ENCODE measurements at regions of chr2 and their contacts with region 1.

Region 1: DNA sequence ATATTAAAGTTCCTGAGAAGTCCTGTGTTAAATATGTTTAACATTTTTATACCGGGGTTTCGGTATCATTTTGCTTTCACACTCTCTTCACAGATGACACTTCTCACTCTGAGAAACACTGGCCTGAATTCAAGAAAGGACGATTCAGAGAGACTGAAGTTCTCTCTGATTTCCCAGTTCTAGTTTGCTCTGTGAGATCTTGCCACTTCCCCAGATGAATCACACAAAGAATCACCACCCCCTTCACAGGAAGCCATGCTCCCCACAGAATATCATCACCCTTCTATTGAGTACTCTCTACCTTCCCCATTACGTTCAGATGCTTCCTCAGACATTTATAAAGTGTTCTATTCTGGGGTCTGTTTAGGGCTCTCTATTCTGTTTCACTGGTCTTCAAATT is 16.1 kb upstream of the CD207 start:
- DNase-seq: peak; percentile 57
- H3K4me3 Mint-ChIP-seq: peak overlapping the region; percentile 1
- H3K27ac Mint-ChIP-seq: peak overlapping the region; percentile 60
- H3K4me1 Mint-ChIP-seq: peaks cover 21% of the 10 kb centered on the region
- H3K27me3 Mint-ChIP-seq: peaks cover 2% of the 10 kb centered on the region

Region 2: GRCh38 chr2:70656421-70657010 is 195.2 kb before region 1 on chr2:
- CTCF ChIA-PET with region 1: interaction called, 3 read pairs
- POLR2A ChIA-PET with region 1: no interaction called
- intact Hi-C with region 1: loop called (anchors 10 kb)
- DNase-seq: peak; percentile 50
- H3K4me3 Mint-ChIP-seq: no peak overlapping the region
- H3K27ac Mint-ChIP-seq: no peak overlapping the region
- H3K4me1 Mint-ChIP-seq: peaks cover 18% of the 10 kb centered on the region
- H3K27me3 Mint-ChIP-seq: peaks cover 20% of the 10 kb centered on the region

Region 3: GRCh38 chr2:70817284-70817954 is 34.3 kb before region 1 on chr2:
- CTCF ChIA-PET with region 1: no interaction called
- POLR2A ChIA-PET with region 1: no interaction called
- intact Hi-C with region 1: loop called (anchors 1 kb)
- DNase-seq: no peak
- H3K4me3 Mint-ChIP-seq: no peak overlapping the region
- H3K27ac Mint-ChIP-seq: no peak overlapping the region
- H3K4me1 Mint-ChIP-seq: peaks cover 5% of the 10 kb centered on the region
- H3K27me3 Mint-ChIP-seq: peaks cover 16% of the 10 kb centered on the region

Region 4: DNA sequence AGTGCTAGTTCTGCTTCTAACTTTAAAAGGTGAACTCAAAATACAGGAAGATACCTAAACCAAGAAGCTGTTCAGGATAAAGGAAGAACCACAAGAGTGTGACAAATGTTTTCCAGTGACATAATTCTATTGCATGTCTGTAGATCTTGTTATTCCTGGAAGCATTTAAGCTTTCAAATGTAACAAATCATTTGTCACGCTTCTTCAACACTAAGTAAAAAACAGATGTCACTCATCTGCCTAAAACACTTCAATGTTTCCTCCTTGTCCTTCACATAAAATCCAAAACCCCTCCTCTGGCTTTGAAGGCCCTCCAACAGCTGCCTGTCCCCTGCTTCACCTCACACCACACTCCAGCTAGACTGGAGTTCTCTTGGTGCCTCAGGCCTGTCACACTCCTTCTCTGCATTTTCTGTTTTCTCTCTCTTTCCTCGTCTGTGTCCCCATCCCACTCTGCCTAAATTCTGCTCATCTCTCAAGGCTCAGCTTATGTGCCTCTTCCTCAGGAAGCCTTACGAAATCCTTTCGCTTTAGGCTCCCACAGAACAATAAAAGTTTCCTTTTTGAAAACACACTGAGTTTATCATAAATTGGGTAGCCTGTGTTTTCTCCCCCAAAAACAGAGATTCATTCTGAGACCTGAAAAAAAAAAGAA is 24.9 kb before region 1 on chr2:
- CTCF ChIA-PET with region 1: no interaction called
- POLR2A ChIA-PET with region 1: no interaction called
- intact Hi-C with region 1: loop called (anchors 1 kb)
- DNase-seq: no peak
- H3K4me3 Mint-ChIP-seq: no peak overlapping the region
- H3K27ac Mint-ChIP-seq: peak overlapping the region; percentile 67
- H3K4me1 Mint-ChIP-seq: peaks cover 6% of the 10 kb centered on the region
- H3K27me3 Mint-ChIP-seq: peaks cover 5% of the 10 kb centered on the region

Region 5: GRCh38 chr2:70941686-70942085 is 90.0 kb after region 1 on chr2:
- CTCF ChIA-PET with region 1: no interaction called
- POLR2A ChIA-PET with region 1: no interaction called
- intact Hi-C with region 1: no loop called
- DNase-seq: no peak
- H3K4me3 Mint-ChIP-seq: no peak overlapping the region
- H3K27ac Mint-ChIP-seq: no peak overlapping the region
- H3K4me1 Mint-ChIP-seq: no peaks in the 10 kb centered on the region
- H3K27me3 Mint-ChIP-seq: peaks cover 3% of the 10 kb centered on the region

Measured in activated CD4-positive, alpha-beta memory T cell treated with anti-CD3 and anti-CD28 coated beads for 36 hours (primary cell).